Thyroid gland (tissue), 4 donors: ENCODE measurements at regions of chr1 and their contacts with region 1.

Region 1: GRCh38 chr1:241640029-241640818 is at the starts of genes CHML and OPN3:
- DNase-seq: peak; percentile 92 to 94
- H3K4me3 ChIP-seq: peak within 1 kb of the TSS; percentile 38 to 88 (median 61)
- H3K27ac ChIP-seq: peak within 1 kb of the TSS in 2 of 3 donors; percentile 71 to 73
- H3K4me1 ChIP-seq: peaks cover 18 to 27% of the 10 kb centered on the region in 2 donors
- H3K27me3 ChIP-seq: no peaks in the 10 kb centered on the region
- CTCF ChIP-seq: peak in 1 of 6 experiments; percentile 6
- POLR2A ChIP-seq: peak; percentile 56 to 96
- total RNA-seq, gene CHML: 7.9 to 13.9 (median 11.3) TPM
- total RNA-seq, gene OPN3: 19.2 to 45.0 (median 31.3) TPM

Region 2: GRCh38 chr1:241531195-241532161 is 108.7 kb before region 1 on chr1:
- intact Hi-C with region 1: loop called (anchors 5 kb)
- DNase-seq: no peak
- H3K4me3 ChIP-seq: peak overlapping the region in 2 of 3 donors; percentile 23 to 41
- H3K27ac ChIP-seq: no peak overlapping the region
- H3K4me1 ChIP-seq: no peaks in the 10 kb centered on the region
- H3K27me3 ChIP-seq: no peaks in the 10 kb centered on the region
- CTCF ChIP-seq: peak in 4 of 6 experiments; percentile 25 to 67 (median 60)
- POLR2A ChIP-seq: no peak